ENCODE measurements at regions of chr1 and their contacts with region 1.

Region 1: GRCh38 chr1:198627436-198628066 is 11.3 kb upstream of the PTPRC start:
- DNase-seq: no peak
- H3K4me3 ChIP-seq: no peak overlapping the region
- H3K27ac ChIP-seq: no peak overlapping the region
- H3K4me1 ChIP-seq: no peaks in the 10 kb centered on the region
- H3K27me3 ChIP-seq: no peaks in the 10 kb centered on the region
- CTCF ChIP-seq: no peak
- POLR2A ChIP-seq: no peak

Region 2: DNA sequence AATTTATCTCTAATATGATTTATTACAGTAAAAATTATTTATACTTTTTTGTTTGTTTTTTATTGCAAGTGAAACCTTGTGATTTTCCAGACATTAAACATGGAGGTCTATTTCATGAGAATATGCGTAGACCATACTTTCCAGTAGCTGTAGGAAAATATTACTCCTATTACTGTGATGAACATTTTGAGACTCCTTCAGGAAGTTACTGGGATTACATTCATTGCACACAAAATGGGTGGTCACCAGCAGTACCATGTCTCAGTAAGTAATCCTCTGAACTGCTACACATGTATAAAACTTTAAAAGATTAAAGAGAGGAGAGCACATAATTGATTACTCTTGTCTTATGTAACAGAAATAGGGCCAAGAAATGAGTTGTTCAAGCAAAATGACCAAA is 1848.5 kb before region 1 on chr1:
- intact Hi-C with region 1: no loop called
- DNase-seq: no peak
- H3K4me3 ChIP-seq: no peak overlapping the region
- H3K27ac ChIP-seq: no peak overlapping the region
- H3K4me1 ChIP-seq: no peaks in the 10 kb centered on the region
- H3K27me3 ChIP-seq: no peaks in the 10 kb centered on the region
- CTCF ChIP-seq: no peak
- POLR2A ChIP-seq: no peak

Region 3: GRCh38 chr1:198549866-198550265 is 77.7 kb before region 1 on chr1:
- intact Hi-C with region 1: loop called (anchors 2 kb)
- DNase-seq: no peak
- H3K4me3 ChIP-seq: no peak overlapping the region
- H3K27ac ChIP-seq: no peak overlapping the region
- H3K4me1 ChIP-seq: no peaks in the 10 kb centered on the region
- H3K27me3 ChIP-seq: no peaks in the 10 kb centered on the region
- CTCF ChIP-seq: no peak
- POLR2A ChIP-seq: no peak

Measured in breast epithelium (tissue), 4 donors.